GM10248 (cell line): ENCODE measurements at regions of chr20 and their contacts with region 1.

Region 1: DNA sequence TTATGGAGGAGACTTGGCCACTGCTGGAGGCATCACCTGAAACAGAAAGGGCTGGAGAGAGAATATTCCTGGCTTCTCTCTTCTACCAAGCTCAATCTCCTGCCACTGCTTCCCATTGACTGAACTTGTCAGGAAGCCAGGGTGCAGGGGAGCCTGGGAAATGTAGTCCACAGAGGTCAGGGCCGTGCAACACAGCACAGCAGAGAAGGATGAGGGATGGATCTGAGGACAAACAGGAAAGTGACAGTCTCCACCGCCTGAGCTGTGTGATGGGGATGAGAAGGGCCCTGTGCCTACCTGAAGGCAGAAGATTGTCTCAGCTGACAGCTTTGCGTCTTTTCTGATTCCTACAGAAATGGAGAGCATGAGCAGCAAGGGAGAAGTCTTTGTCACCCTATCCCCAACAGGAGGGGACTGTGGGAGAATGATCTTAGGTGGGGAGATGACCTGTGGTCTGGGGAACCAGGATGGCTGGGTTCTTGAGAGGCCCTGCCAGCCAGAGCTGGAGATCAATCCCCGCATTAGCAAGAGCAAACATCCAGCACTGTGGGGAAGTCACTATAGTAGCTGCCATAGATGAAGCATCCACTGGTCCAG is 114.2 kb downstream of the SNX5 start:
- DNase-seq: no peak
- CTCF ChIP-seq: no peak

Region 2: DNA sequence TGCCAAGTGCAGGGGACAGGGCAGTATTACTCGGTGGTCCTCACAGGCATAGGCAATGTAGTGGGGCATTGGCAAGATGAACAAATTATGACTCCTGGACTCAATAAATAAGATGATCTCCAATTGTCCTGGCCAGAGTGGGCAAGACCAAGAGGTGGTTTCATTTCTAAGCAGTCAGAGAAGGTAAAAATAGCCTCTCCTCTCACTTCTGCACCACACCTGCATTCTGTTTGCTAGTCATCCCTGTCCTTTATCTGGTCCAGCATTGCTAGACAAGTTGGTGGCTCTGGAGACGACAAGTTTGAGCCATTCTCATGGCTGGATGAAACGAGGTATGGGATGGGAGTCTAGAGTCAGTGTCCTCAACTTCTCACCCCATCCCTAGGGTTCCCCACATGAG is 71.6 kb before region 1 on chr20:
- CTCF ChIA-PET with region 1: no interaction called
- POLR2A ChIA-PET with region 1: no interaction called
- DNase-seq: peak; percentile 60
- CTCF ChIP-seq: no peak

Region 3: GRCh38 chr20:17806739-17807441 is 47.5 kb before region 1 on chr20:
- CTCF ChIA-PET with region 1: no interaction called
- POLR2A ChIA-PET with region 1: no interaction called
- DNase-seq: no peak
- CTCF ChIP-seq: no peak

Region 4: GRCh38 chr20:17870086-17870740 is 15.8 kb after region 1 on chr20:
- CTCF ChIA-PET with region 1: interaction called, 10 read pairs
- POLR2A ChIA-PET with region 1: no interaction called
- DNase-seq: no peak
- CTCF ChIP-seq: no peak

Region 5: DNA sequence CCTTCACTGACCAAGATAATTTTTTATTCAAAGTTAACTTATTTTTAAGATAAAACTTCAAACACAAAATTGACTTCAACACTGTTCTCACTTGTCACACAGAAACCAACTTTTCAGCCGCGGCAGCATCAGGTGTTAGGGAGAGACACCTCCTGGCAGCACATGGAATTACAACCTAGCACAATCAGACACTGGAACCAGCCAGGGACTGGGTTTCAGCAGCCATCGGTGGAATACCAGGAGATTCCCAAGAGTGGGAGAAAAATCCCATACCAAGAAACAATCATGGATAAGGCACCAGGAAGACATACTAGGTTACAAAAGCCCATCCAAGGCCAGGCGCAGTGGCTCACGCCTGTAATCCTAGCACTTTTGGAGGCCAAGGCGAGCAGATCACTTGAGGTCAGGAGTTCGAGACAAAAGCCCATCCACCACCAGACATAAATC is 44.2 kb after region 1 on chr20:
- CTCF ChIA-PET with region 1: interaction called, 17 read pairs
- POLR2A ChIA-PET with region 1: no interaction called
- DNase-seq: peak; percentile 65
- CTCF ChIP-seq: peak; percentile 85